ENCODE measurements at regions of chr22 and their contacts with region 1.

Region 1: GRCh38 chr22:44697423-44698141 is 4.4 kb upstream of the PRR5 start:
- DNase-seq: peak; percentile 76 to 78
- H3K4me3 ChIP-seq: no peak overlapping the region
- H3K27ac ChIP-seq: peak overlapping the region; percentile 76 to 90
- H3K4me1 ChIP-seq: peaks cover 4 to 7% of the 10 kb centered on the region in 2 donors
- H3K27me3 ChIP-seq: no peaks in the 10 kb centered on the region
- CTCF ChIP-seq: peak; percentile 80 to 96 (median 92)
- POLR2A ChIP-seq: no peak

Region 2: DNA sequence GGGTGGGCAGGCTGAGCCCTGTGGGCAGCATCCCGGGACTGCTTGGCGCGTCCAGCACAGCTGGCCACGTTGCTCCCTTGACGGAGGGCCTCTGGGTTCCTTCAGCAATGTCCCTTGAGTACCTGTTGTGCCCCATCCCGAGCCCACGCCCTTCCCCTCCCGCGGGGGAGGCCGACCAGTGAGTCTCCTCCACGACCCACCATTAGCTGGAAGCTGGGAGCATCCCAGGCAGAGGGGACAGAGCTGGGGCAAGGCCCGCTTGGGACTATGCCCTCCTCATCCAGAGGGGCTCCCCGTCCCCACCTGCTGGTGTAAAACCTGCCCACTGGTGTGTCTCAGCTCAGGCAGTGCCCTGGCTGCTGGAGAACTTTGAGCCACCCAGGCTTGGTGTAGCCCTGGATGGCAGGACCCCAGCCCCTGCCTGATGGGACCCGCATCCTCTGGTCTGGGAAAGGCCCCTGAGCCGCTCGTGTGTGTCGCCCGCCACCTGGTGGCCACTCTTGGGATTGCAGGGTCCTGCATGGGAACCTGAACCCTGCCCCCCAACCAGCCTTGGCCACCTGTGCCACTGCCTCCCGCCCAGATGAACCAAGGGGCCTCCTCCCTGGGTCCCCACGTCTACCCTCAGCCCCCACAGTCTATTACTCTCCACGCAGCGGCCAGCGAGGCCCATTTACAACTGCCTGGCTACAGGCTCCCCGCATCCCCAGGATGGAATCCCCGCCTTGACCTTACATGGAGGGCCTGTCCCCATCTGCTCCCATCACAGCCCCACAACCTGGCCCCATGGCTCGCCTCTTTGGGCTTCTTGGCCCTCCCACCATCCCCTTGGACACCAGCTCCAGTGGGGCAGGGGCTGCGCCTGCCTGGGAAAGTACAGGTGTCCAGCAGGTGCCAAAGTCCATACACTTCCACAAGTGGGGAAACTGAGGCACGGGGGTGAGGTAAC is 38.2 kb after region 1 on chr22:
- intact Hi-C with region 1: loop called (anchors 5 kb)
- DNase-seq: peak; percentile 69 to 70
- H3K4me3 ChIP-seq: no peak overlapping the region
- H3K27ac ChIP-seq: no peak overlapping the region
- H3K4me1 ChIP-seq: no peaks in the 10 kb centered on the region
- H3K27me3 ChIP-seq: no peaks in the 10 kb centered on the region
- CTCF ChIP-seq: peak; percentile 93 to 99 (median 98)
- POLR2A ChIP-seq: no peak

Measured in uterus (tissue), 4 donors.